A549 (cell line): ENCODE measurements at regions of chr20 and their contacts with region 1.

Region 1: DNA sequence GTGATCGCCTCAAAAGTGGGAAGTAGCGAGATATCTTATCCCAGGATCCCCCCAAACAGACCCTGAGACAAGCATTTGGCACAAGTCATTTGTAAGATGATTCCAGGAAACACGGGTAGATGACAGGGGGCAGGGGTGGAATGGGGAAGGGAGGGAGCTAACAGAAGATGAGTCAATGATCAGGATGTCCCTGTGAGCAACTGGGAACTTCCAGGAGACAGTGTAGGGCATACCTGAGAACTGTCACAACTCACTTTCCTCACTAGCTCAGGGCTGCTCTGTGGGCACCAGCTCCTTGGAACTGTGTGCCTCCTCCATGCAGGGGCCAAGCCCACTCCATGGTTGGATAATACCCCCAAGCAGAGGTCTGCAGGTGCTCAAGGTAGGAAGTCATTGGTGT is 38.5 kb upstream of the VSX1 start:
- DNase-seq: peak in 1 of 2 experiments; percentile 33
- ATAC-seq: peak in 1 of 2 experiments; percentile 36; a peak in 2 of 6 replicates
- H3K4me3 ChIP-seq: no peak overlapping the region
- H3K27ac ChIP-seq: peak overlapping the region in 1 of 2 experiments; percentile 15; a peak in 1 of 6 replicates
- H3K4me1 ChIP-seq: peaks cover 42% of the 10 kb centered on the region
- CTCF ChIP-seq: no peak
- EP300 ChIP-seq: no peak
- POLR2A ChIP-seq: no peak
- RAD21 ChIP-seq: no peak

Region 2: GRCh38 chr20:24708411-24709295 is 411.8 kb before region 1 on chr20:
- CTCF ChIA-PET with region 1: no interaction called
- POLR2A ChIA-PET with region 1: no interaction called
- DNase-seq: no peak
- ATAC-seq: 0 out of 6 replicates have a peak, but pooled peaks of 1 of the 2 experiments have one; percentile 19
- H3K4me3 ChIP-seq: no peak overlapping the region
- H3K27ac ChIP-seq: no peak overlapping the region
- H3K4me1 ChIP-seq: no peaks in the 10 kb centered on the region
- CTCF ChIP-seq: no peak
- EP300 ChIP-seq: no peak
- POLR2A ChIP-seq: no peak
- RAD21 ChIP-seq: no peak

Region 3: DNA sequence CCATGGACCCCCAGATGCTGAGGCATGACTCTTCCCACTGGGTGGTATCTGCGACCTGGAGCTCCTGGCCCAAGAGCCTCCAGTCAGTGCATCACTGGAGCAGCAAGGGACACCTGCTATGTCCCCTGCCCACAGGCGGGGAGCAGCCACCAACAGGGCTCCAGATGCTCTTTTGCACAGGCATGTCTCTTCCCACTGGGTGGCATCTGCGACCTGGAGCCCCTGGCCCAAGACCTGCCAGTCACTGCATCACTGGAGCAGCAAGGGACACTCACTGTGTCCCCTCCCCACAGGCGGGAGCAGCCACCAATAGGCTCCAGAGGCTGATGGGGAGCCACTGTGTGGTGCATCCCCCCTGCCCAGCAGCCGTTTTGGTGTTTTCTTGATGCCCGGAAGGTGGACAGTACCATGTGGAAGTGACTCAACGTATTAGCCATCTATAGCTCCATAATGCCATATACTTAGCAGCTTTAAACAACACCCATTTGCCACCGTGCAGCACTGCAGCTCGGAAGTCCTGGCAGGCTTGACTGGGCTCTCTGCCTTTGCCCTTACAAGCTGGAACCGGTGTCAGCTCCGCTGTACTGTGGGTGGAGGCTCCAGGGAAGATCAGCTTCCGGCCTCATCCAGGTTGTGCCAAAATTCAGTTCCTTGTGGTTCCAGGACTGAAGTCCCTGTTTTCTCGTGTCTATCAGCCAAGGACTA is 296.3 kb before region 1 on chr20:
- CTCF ChIA-PET with region 1: no interaction called
- POLR2A ChIA-PET with region 1: no interaction called
- DNase-seq: no peak
- ATAC-seq: no peak
- H3K4me3 ChIP-seq: no peak overlapping the region
- H3K27ac ChIP-seq: no peak overlapping the region
- H3K4me1 ChIP-seq: no peaks in the 10 kb centered on the region
- CTCF ChIP-seq: no peak
- EP300 ChIP-seq: no peak
- POLR2A ChIP-seq: no peak
- RAD21 ChIP-seq: no peak

Region 4: GRCh38 chr20:25130831-25131230 is 10.4 kb after region 1 on chr20:
- CTCF ChIA-PET with region 1: interaction called, 12 read pairs
- POLR2A ChIA-PET with region 1: no interaction called
- DNase-seq: no peak
- ATAC-seq: 0 out of 6 replicates have a peak, but pooled peaks of 1 of the 2 experiments have one; percentile 24
- H3K4me3 ChIP-seq: no peak overlapping the region
- H3K27ac ChIP-seq: no peak overlapping the region
- H3K4me1 ChIP-seq: peaks cover 19% of the 10 kb centered on the region
- CTCF ChIP-seq: no peak
- EP300 ChIP-seq: no peak
- POLR2A ChIP-seq: no peak
- RAD21 ChIP-seq: no peak